Right ventricle myocardium superior (tissue), 1 donor: ENCODE measurements at regions of chr11 and their contacts with region 1.

Region 1: DNA sequence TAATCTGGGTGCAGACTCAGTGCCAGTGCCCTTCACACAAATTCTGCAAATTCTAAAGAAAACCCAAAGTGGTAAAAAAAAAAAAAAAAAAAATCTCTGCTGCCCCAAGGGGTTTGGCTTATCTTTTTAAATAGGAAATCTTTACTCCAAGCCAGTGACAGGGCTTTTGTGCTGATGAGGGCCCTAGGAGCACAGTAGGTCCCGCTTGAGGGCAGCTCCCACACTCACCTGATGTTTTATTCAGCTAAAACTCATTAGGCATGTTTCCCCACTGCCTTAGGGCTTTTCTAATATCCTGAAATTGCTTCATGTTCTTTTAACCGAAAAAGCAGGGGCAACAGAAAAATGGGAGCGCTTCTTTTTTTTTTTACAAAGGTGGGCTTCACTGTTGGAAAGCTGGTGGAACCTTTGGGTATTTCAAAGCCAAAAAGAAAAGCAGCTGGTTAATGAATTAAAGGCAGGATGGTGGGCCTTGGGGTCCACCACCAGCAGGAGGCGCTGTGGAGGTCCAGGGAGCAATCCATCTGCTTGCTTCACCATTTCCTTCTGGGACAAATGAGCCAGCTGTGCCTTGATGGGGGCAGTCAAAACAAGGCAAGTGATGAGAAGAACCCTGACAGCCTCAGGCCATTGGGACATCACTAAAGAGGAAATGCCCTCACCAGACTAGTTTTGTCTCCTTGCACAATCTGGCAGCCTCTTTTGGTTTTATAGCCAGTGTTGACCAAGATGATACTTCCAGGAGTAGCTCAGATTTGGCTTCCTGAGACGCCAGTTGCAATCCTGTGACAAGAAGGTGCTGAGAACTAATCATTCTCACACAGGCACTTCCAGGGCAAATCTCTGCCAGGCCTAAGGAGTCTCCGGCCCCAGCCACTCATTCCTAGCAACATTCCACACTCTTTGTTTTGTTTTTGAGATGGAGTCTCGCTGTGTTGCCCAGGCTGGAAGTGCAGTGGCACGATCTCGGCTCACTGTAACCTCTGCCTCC is 38.4 kb upstream of the WEE1 start:
- DNase-seq: peak; percentile 90
- ATAC-seq: peak; percentile 67

Region 2: DNA sequence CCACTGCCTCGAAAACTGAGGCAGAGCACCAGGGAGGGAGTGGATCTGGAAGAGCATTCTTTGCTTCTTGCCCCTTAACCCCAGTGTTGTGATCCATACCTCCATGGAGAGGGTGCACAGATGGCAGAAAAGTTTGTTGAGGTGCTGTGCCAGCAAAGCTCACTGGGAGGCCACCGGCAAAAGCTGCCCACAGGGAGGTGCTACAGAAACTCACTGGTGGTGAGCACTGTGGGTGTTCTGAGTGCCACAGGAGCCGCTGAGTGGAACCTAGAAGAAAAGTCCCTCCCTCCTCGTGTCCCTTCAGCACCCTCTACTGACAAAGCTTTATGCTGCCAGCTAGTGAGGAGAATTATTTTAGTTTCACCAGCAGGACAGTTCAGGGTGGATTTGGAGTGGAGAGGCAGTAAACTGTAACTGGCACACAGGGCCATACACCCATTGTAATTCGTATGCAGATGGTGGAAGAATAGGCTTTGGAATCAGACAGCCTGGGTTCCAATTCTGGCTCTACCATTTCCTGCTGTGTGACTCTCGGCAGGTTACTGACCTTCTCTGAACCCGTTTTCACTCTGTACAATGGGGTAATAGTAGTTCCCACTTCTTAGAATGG is 213.4 kb after region 1 on chr11:
- intact Hi-C with region 1: loop called (anchors 10 kb)
- DNase-seq: no peak
- ATAC-seq: peak; percentile 85